ENCODE measurements at regions of chr1 and their contacts with region 1.

Region 1: GRCh38 chr1:165768513-165769394 is at the start of gene TMCO1:
- DNase-seq: peak; percentile 96
- H3K4me3 Mint-ChIP-seq: peak within 1 kb of the TSS; percentile 98
- H3K27ac Mint-ChIP-seq: peak within 1 kb of the TSS; percentile 97
- H3K4me1 Mint-ChIP-seq: peaks cover 49% of the 10 kb centered on the region
- H3K27me3 Mint-ChIP-seq: no peaks in the 10 kb centered on the region
- total RNA-seq, gene TMCO1: 50.5 to 50.7 TPM

Region 2: DNA sequence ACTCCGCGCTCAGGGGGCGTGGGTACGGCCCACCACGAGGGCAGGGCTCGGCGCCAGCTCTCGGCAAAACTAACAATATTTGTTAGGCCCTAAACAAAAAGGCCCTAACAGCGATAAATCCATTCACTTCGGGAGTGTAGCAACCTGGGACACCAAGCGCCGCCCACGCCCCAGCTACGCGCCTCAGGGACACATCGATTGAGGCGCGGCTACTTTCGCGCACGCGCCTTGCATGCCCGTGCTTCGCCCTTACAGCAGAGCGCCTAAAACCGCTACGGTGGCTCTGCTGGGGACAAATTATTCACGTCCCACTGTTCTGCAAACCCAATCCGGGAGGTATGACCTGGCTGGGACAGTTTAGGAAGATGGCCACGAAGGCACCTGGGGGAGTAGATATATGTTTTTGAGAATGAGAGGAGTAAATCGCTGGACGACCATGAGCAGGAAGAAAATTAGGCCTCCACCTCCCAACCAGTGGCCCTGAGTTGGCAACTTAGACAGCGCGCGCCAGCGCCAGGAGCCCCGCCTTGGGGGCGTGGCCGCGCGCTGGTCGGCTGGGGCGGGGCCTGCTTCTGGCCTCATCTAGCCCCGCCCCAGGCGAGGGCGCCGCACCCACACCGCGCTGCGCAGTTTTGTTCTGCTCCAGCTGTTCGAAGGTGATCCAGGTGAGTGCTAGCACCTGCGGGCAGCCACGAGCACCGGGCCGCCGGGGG is 138.0 kb before region 1 on chr1 and contains the start of gene MGST3:
- CTCF ChIA-PET with region 1: no interaction called
- intact Hi-C with region 1: loop called (anchors 1 kb)
- DNase-seq: peak; percentile 97
- H3K4me3 Mint-ChIP-seq: no peak within 1 kb of the TSS
- H3K27ac Mint-ChIP-seq: no peak within 1 kb of the TSS
- H3K4me1 Mint-ChIP-seq: peaks cover 19% of the 10 kb centered on the region
- H3K27me3 Mint-ChIP-seq: no peaks in the 10 kb centered on the region
- total RNA-seq, gene MGST3: 26.6 to 29.2 TPM

Region 3: GRCh38 chr1:165914136-165914798 is 145.5 kb after region 1 on chr1:
- CTCF ChIA-PET with region 1: interaction called, 4 read pairs
- intact Hi-C with region 1: loop called (anchors 2 kb)
- DNase-seq: peak; percentile 82
- H3K4me3 Mint-ChIP-seq: no peak overlapping the region
- H3K27ac Mint-ChIP-seq: no peak overlapping the region
- H3K4me1 Mint-ChIP-seq: no peaks in the 10 kb centered on the region
- H3K27me3 Mint-ChIP-seq: no peaks in the 10 kb centered on the region

Region 4: GRCh38 chr1:166838766-166839599 is 1070.2 kb after region 1 on chr1 and contains the start of gene POGK:
- CTCF ChIA-PET with region 1: no interaction called
- intact Hi-C with region 1: loop called (anchors 10 kb)
- DNase-seq: peak; percentile 91
- H3K4me3 Mint-ChIP-seq: peak within 1 kb of the TSS; percentile 95
- H3K27ac Mint-ChIP-seq: peak within 1 kb of the TSS; percentile 96
- H3K4me1 Mint-ChIP-seq: peaks cover 46% of the 10 kb centered on the region
- H3K27me3 Mint-ChIP-seq: no peaks in the 10 kb centered on the region
- total RNA-seq, gene POGK: 33.1 to 34.9 TPM

Measured in activated naive CD4-positive, alpha-beta T cell treated with anti-CD3 and anti-CD28 coated beads for 36 hours (primary cell).